Activated CD8-positive, alpha-beta memory T cell treated with anti-CD3 and anti-CD28 coated beads, Interleukin-2, amount 10 ng/mL, durations not matched to agents 7 days and 5 days (primary cell): ENCODE measurements at regions of chr3 and their contacts with region 1.

Region 1: GRCh38 chr3:138186803-138187295 is 252 bp upstream of the ARMC8 start:
- DNase-seq: peak; percentile 93
- ATAC-seq: peak; percentile 92
- H3K4me3 Mint-ChIP-seq: peak overlapping the region; percentile 85
- H3K27ac Mint-ChIP-seq: peak overlapping the region; percentile 97
- H3K4me1 Mint-ChIP-seq: peaks cover 33% of the 10 kb centered on the region
- H3K27me3 Mint-ChIP-seq: peaks cover 18% of the 10 kb centered on the region

Region 2: GRCh38 chr3:137615659-137616418 is 571.0 kb before region 1 on chr3:
- CTCF ChIA-PET with region 1: no interaction called
- DNase-seq: no peak
- ATAC-seq: no peak
- H3K4me3 Mint-ChIP-seq: no peak overlapping the region
- H3K27ac Mint-ChIP-seq: no peak overlapping the region
- H3K4me1 Mint-ChIP-seq: no peaks in the 10 kb centered on the region
- H3K27me3 Mint-ChIP-seq: no peaks in the 10 kb centered on the region

Region 3: GRCh38 chr3:138174421-138175122 is 12.3 kb before region 1 on chr3 and contains the start of gene DBR1:
- CTCF ChIA-PET with region 1: interaction called, 15 read pairs
- DNase-seq: peak; percentile 85
- ATAC-seq: peak; percentile 92
- H3K4me3 Mint-ChIP-seq: peak within 1 kb of the TSS; percentile 97
- H3K27ac Mint-ChIP-seq: peak within 1 kb of the TSS; percentile 95
- H3K4me1 Mint-ChIP-seq: peaks cover 33% of the 10 kb centered on the region
- H3K27me3 Mint-ChIP-seq: peaks cover 2% of the 10 kb centered on the region
- total RNA-seq, gene DBR1: 22.0 to 23.0 TPM

Region 4: GRCh38 chr3:138213398-138214085 is 26.7 kb after region 1 on chr3:
- CTCF ChIA-PET with region 1: no interaction called
- DNase-seq: no peak
- ATAC-seq: no peak
- H3K4me3 Mint-ChIP-seq: no peak overlapping the region
- H3K27ac Mint-ChIP-seq: no peak overlapping the region
- H3K4me1 Mint-ChIP-seq: peaks cover 6% of the 10 kb centered on the region
- H3K27me3 Mint-ChIP-seq: no peaks in the 10 kb centered on the region

Region 5: DNA sequence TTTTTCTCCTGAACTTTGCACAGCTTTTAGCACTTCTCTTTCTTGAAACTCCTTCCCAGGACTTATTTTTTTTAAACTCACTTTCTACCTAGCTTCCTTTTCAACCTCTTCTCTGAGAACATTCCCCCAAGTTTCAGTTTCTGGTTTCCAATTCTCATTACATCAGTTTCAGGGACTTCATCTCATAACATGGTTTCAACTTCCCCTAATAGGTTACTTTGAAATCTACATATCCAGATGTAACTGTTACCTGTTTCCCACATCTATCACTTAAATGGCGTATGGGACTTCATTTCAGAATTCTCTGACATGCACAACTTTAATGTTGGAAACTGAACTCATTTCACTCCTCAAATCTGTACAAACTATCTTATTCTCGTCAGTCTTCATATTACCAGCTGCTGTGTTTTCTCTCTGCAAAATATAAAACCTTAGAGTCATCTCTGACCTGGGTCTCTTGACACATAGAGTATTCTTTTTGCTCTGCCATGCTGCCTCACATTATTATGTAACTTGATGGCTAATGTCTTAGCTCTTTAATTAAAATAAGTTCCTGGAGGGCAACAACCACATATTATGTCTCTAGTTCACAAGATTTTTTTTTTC is 84.4 kb after region 1 on chr3:
- CTCF ChIA-PET with region 1: no interaction called
- DNase-seq: no peak
- ATAC-seq: no peak
- H3K4me3 Mint-ChIP-seq: no peak overlapping the region
- H3K27ac Mint-ChIP-seq: peak overlapping the region; percentile 19
- H3K4me1 Mint-ChIP-seq: peaks cover 8% of the 10 kb centered on the region
- H3K27me3 Mint-ChIP-seq: no peaks in the 10 kb centered on the region

Region 6: DNA sequence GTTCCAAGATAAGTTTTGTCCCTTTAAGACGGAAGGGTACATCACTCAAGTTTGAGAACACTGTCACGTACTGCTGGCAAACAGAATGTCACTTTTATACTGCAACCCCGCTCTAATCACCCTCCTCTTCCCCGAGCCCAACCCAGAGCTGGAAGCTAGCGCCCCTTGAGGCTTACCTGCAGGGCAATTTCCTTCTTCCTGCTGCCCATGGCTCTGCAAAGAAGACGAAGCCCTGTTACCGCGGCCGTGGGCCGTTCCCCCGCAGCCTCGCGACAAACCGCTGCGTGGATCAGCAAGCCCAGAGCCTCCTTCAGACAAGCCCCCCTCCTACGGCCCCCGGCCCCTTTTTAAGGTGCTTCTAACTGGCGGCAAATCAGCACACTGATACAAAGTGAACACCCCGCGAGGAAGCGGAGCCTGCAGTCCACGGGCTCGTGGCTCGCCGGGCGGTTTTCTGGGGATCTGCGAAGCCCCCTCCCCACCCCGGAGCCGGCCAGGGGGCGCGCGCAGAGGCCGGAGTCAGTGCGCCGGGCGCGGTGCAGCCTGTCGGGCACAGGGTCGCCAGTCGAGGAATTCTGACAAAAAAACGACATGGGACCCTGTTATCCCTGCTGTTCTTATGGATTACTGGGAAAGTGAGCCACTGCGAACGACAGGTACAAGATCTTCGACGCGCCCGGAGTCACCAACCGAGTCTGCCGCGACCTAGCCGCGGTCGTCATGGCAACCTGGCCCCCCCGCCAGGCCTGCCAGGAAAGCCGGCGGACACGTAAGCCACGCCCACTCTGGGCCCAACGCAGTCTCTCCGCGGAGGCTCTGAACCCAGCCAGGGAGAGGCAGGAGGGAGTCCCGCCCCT is 142.5 kb after region 1 on chr3 and contains the start of gene NME9:
- CTCF ChIA-PET with region 1: interaction called, 12 read pairs
- DNase-seq: peak; percentile 92
- ATAC-seq: peak; percentile 89
- H3K4me3 Mint-ChIP-seq: peak within 1 kb of the TSS; percentile 86
- H3K27ac Mint-ChIP-seq: peak within 1 kb of the TSS; percentile 81
- H3K4me1 Mint-ChIP-seq: peaks cover 29% of the 10 kb centered on the region
- H3K27me3 Mint-ChIP-seq: peaks cover 6% of the 10 kb centered on the region
- total RNA-seq, gene NME9: not detected